Aorta (tissue), 5 donors: ENCODE measurements at regions of chr11 and their contacts with region 1.

Region 1: GRCh38 chr11:3091791-3092602 is 34.8 kb upstream of the CARS1 start:
- DNase-seq: peak; percentile 68 to 89
- ATAC-seq: peak; percentile 72
- H3K4me3 ChIP-seq: no peak overlapping the region
- H3K27ac ChIP-seq: no peak overlapping the region
- H3K4me1 ChIP-seq: no peaks in the 10 kb centered on the region
- H3K27me3 ChIP-seq: no peaks in the 10 kb centered on the region

Region 2: GRCh38 chr11:2532704-2533586 is 559.1 kb before region 1 on chr11:
- intact Hi-C with region 1: loop called in 1 of 2 experiments (anchors 10 kb)
- DNase-seq: peak; percentile 94 to 98
- ATAC-seq: peak; percentile 91
- H3K4me3 ChIP-seq: no peak overlapping the region
- H3K27ac ChIP-seq: no peak overlapping the region
- H3K4me1 ChIP-seq: no peaks in the 10 kb centered on the region
- H3K27me3 ChIP-seq: no peaks in the 10 kb centered on the region

Region 3: GRCh38 chr11:2930704-2931428 is 161.1 kb before region 1 on chr11:
- intact Hi-C with region 1: loop called in 1 of 2 experiments (anchors 2 kb)
- DNase-seq: peak; percentile 76 to 84
- ATAC-seq: peak; percentile 40
- H3K4me3 ChIP-seq: no peak overlapping the region
- H3K27ac ChIP-seq: peak overlapping the region in 1 of 2 donors; percentile 1
- H3K4me1 ChIP-seq: no peaks in the 10 kb centered on the region
- H3K27me3 ChIP-seq: peaks cover 0 to 2% of the 10 kb centered on the region in 2 donors

Region 4: GRCh38 chr11:3037040-3037944 is 54.7 kb before region 1 on chr11:
- intact Hi-C with region 1: loop called (anchors 2 to 5 kb)
- DNase-seq: peak; percentile 87 to 94
- ATAC-seq: peak; percentile 77
- H3K4me3 ChIP-seq: no peak overlapping the region
- H3K27ac ChIP-seq: no peak overlapping the region
- H3K4me1 ChIP-seq: no peaks in the 10 kb centered on the region
- H3K27me3 ChIP-seq: no peaks in the 10 kb centered on the region

Region 5: DNA sequence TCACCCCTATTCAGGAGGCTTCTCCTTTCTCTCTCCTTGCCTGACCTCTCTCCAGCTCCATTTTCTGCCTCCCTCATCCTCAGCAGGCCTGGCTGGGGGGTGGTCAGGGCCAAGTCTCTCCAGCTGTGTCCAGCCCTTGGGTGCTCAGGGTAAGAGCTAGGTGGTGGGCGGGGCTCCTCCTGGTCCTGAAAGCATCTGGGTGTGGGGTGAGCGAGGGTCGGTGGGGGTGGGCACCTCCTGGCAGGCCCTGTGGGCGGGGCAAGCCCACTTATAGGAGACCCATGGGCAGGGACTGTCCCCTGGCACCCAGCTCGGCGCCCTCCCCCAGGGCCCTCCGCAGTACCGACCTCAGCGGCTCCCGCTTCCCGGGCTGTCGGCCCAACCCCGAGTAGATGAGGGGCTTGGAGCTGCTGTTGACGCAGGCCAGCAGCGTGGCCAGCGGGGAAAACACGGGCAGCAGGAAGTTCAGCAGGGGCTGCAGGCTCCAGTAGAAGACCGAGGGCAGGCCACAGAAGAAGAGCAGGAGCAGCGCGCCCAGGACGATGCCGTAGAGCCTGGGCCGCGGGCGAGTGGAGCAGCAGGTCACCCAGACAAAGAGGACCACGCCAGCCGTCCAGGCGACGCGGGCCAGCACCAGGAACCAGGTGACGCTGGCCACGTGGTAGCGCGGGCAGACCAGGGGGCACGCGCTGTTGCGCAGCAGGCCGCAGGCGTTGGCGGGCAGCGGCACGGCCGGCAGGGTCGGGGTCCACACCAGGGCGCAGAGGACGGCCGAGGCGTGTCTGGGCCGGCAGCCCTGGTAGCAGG is 125.9 kb after region 1 on chr11:
- intact Hi-C with region 1: loop called in 1 of 2 experiments (anchors 10 kb)
- DNase-seq: peak; percentile 40 to 69
- ATAC-seq: no peak
- H3K4me3 ChIP-seq: no peak overlapping the region
- H3K27ac ChIP-seq: no peak overlapping the region
- H3K4me1 ChIP-seq: no peaks in the 10 kb centered on the region
- H3K27me3 ChIP-seq: no peaks in the 10 kb centered on the region